ENCODE measurements at regions of chr15 and their contacts with region 1.

Region 1: DNA sequence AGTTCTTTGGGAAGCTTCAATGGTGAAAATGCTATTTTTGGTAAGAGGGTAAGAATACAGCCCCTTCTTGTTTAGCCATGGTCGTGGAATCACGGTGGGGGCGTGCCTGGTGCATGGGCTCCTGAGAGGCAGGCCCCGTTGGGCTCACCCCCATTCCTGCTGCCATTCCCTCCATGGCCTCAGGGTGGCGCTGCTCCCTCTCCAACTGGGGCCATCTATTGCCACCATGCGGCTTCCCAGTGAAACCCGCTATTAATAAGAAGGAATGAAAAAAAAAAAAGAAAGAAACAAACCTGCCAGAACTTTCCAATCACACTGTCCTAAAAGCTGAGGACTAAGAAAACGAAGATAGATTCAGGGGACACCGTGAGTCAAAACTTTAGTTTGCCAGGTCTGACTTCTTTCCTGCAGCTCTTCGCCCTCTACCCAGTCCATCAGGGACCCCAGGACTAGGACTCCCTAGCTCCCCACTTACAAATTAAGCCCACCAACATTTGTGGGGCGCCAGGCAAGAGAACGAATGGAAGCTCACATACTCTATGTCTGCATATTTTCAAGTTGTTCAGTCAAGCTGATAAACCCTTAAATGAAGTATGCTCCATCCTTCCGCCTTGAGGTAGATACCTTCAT is 30.6 kb upstream of the ABHD2 start:
- DNase-seq: peak; percentile 50 to 73
- ATAC-seq: peak; percentile 81 to 94
- H3K4me3 ChIP-seq: no peak overlapping the region
- H3K27ac ChIP-seq: no peak overlapping the region
- H3K4me1 ChIP-seq: peaks cover 0 to 3% of the 10 kb centered on the region in 2 donors
- H3K27me3 ChIP-seq: no peaks in the 10 kb centered on the region
- CTCF ChIP-seq: peak; percentile 97 to 99 (median 98)
- POLR2A ChIP-seq: no peak

Region 2: DNA sequence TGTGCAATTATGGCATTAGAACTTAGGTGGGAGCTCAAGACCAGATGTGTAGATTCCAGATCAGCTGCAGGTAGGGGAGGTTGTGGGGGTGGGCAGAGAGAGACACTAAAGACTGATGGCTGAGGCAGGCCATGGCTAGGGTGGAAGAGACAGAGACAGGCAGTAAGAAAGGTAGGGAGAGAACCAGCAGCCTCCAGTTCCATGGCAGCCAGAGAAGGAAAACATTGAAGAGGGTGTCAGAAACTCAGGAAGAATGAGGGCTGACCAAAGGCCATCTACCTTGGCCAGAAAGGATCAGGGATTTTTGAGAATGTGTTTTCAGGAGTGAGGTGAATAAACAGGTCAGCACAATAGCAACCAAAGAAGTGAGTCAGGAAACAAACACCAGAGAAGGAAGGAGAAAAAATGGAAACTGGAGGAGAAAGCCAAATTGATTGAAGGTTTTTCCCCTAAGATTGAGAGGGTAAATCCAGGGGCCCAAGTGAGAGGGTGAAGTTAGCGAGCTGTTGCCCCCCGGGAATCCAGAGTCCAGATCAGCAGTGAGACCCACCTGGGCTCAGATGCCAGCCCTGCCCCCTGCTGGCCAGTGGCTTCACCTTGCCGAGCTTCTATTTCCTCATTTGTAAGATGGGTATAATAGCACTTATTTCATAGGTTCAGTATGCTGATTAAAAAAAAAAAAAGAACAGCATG is 71.7 kb after region 1 on chr15:
- in situ Hi-C with region 1: no loop called
- intact Hi-C with region 1: loop called (anchors 1 kb)
- DNase-seq: peak in 1 of 2 donors; percentile 56
- ATAC-seq: no peak
- H3K4me3 ChIP-seq: no peak overlapping the region
- H3K27ac ChIP-seq: peak overlapping the region; percentile 61 to 81 (median 78)
- H3K4me1 ChIP-seq: peaks cover 48 to 77% of the 10 kb centered on the region in 2 donors
- H3K27me3 ChIP-seq: no peaks in the 10 kb centered on the region
- CTCF ChIP-seq: peak; percentile 37 to 80 (median 71)
- POLR2A ChIP-seq: no peak

Region 3: GRCh38 chr15:89177633-89178306 is 120.2 kb after region 1 on chr15:
- in situ Hi-C with region 1: loop called (anchors 5 kb)
- intact Hi-C with region 1: loop called (anchors 1 kb)
- DNase-seq: peak in 1 of 2 donors; percentile 53
- ATAC-seq: peak in 1 of 2 donors; percentile 57
- H3K4me3 ChIP-seq: no peak overlapping the region
- H3K27ac ChIP-seq: peak overlapping the region in 2 of 4 donors; percentile 25 to 57
- H3K4me1 ChIP-seq: peaks cover 6 to 9% of the 10 kb centered on the region in 2 donors
- H3K27me3 ChIP-seq: no peaks in the 10 kb centered on the region
- CTCF ChIP-seq: peak; percentile 70 to 87 (median 83)
- POLR2A ChIP-seq: no peak

Region 4: DNA sequence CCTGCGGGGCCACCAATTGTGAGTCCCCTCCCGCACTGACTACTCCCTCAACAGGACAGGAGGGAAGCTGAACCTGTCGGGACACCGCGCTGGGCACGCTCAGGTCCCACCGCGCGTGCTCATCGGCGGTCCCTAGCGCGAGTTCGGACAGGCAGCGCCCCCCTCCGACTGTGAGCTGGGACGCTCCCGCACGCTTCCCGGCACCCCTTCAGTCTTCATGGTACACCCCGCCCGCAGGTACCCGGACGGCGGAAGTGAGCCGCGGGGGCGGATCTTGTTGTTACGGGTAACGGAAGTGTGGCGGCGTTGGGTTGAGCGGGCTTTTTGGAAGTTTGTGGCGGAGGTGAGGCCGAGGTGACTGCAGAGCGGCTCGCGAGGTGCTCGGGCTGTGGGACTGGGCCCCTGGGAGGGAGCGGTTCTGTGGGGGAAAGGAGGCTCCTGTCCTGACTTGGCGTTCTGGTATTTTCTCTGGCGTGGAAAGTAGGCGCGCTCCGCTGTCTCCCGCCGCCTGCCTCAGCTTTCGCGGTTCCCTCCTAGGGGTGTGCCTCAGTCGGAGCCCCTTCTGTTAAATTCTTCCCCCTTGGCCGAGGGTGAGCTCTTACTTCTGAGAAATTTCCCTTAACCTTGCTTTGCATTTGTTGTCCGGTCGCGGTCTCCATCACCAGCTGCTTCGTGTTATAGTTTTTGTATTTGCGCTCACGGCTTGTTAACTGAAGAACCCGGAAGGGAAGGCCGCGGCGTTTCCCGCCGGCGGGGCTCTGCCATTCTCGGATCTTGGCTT is 186.3 kb after region 1 on chr15 and contains the start of gene FANCI:
- in situ Hi-C with region 1: no loop called
- intact Hi-C with region 1: loop called (anchors 5 kb)
- DNase-seq: peak; percentile 89 to 93
- ATAC-seq: peak; percentile 96 to 97
- H3K4me3 ChIP-seq: peak within 1 kb of the TSS; percentile 75 to 88 (median 76)
- H3K27ac ChIP-seq: peak within 1 kb of the TSS; percentile 66 to 82 (median 72)
- H3K4me1 ChIP-seq: peaks cover 8 to 15% of the 10 kb centered on the region in 2 donors
- H3K27me3 ChIP-seq: no peaks in the 10 kb centered on the region
- CTCF ChIP-seq: peak; percentile 12 to 55 (median 34)
- POLR2A ChIP-seq: peak in 1 of 2 donors; percentile 27
- total RNA-seq, gene FANCI: 0.80 to 3.3 (median 2.7) TPM

Measured in gastrocnemius medialis (tissue), 4 donors.